Activated CD8-positive, alpha-beta memory T cell treated with anti-CD3 and anti-CD28 coated beads, Interleukin-2, amount 10 ng/mL, durations not matched to agents 7 days and 5 days (primary cell): ENCODE measurements at regions of chr6 and their contacts with region 1.

Region 1: DNA sequence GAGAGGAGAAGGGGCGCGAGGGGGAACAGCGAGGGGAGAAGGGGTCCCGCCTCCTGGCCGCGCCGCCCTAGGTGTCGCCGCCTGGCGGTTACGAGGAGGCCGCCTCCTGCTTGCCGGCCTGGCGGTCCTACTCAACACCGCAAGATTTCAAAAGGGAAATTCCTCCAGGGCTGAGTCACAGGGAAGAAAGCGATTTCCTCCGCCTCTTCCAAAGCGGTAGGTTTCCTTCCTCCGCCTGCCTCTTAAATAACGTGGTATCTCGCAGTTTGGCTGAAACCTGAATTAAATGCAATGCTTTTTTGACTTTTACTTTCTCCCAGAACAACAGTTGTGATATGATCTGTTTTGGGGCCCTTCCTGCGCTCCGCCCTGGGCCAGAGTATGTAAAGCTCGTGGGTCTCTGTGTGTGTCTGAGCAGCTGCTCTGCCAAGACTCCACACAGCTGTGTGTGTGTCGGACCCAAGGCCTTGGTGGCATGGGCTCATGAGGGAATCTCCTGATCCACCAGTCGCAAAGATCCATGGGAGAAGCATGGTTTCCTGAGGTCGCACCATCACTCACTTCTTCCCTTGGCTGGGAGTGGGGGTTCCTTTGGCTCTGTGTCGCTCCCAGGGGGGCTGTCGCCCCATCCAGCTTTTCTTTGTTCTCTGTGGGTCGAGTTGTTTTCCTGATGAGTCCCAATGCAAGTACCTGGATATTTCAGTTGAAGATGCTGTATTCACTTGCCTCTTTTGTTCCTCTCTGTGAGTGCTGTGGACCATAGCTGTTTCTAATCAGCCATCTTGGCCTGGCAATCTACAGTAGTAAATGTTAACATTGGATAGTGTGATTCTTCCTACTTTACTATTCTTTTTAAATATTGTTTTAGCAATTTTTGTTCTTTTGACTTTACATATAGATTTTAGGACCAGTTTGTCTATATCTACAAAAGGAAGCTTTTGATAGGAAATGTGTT is 31.6 kb upstream of the NOTCH4 start:
- DNase-seq: peak; percentile 60
- ATAC-seq: peak; percentile 74
- H3K4me3 Mint-ChIP-seq: peak overlapping the region; percentile 4
- H3K27ac Mint-ChIP-seq: no peak overlapping the region
- H3K4me1 Mint-ChIP-seq: peaks cover 25% of the 10 kb centered on the region
- H3K27me3 Mint-ChIP-seq: peaks cover 47% of the 10 kb centered on the region

Region 2: GRCh38 chr6:32244946-32245398 is 10.5 kb before region 1 on chr6:
- CTCF ChIA-PET with region 1: interaction called, 10 read pairs
- DNase-seq: peak; percentile 72
- ATAC-seq: peak; percentile 79
- H3K4me3 Mint-ChIP-seq: no peak overlapping the region
- H3K27ac Mint-ChIP-seq: no peak overlapping the region
- H3K4me1 Mint-ChIP-seq: peaks cover 24% of the 10 kb centered on the region
- H3K27me3 Mint-ChIP-seq: peaks cover 25% of the 10 kb centered on the region

Region 3: GRCh38 chr6:32271429-32271828 is 16.0 kb after region 1 on chr6:
- CTCF ChIA-PET with region 1: no interaction called
- DNase-seq: no peak
- ATAC-seq: no peak
- H3K4me3 Mint-ChIP-seq: peak overlapping the region; percentile 5
- H3K27ac Mint-ChIP-seq: no peak overlapping the region
- H3K4me1 Mint-ChIP-seq: peaks cover 20% of the 10 kb centered on the region
- H3K27me3 Mint-ChIP-seq: peaks cover 34% of the 10 kb centered on the region

Region 4: DNA sequence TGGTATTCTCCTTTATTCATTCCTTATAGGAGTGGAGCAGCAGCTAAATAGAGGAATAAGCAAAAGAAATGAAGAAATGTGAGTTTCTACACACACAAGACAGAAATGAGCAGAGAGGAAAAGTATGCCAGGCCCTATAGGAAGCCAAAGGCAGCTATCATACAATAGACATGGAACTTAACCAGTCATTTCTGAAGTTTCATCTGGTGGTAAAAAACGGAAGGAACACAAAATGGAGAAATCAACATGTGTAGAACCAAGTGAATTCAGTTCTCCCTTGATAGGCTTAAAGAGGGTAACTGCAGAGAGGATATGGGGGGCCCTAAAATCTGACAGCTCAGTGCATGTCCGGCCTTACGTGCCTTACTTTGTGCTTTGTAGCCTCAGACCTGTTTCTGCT is 71.6 kb after region 1 on chr6:
- CTCF ChIA-PET with region 1: no interaction called
- DNase-seq: no peak
- ATAC-seq: peak; percentile 55
- H3K4me3 Mint-ChIP-seq: no peak overlapping the region
- H3K27ac Mint-ChIP-seq: no peak overlapping the region
- H3K4me1 Mint-ChIP-seq: peaks cover 21% of the 10 kb centered on the region
- H3K27me3 Mint-ChIP-seq: peaks cover 28% of the 10 kb centered on the region